A673 (cell line): ENCODE measurements at regions of chr6 and their contacts with region 1.

Region 1: GRCh38 chr6:20266851-20267608 is 54.8 kb upstream of the MBOAT1 start:
- DNase-seq: no peak
- H3K4me3 ChIP-seq: no peak overlapping the region
- H3K27ac ChIP-seq: no peak overlapping the region
- H3K4me1 ChIP-seq: no peaks in the 10 kb centered on the region
- H3K27me3 ChIP-seq: no peaks in the 10 kb centered on the region
- CTCF ChIP-seq: no peak

Region 2: GRCh38 chr6:20069021-20069522 is 198.0 kb before region 1 on chr6:
- CTCF ChIA-PET with region 1: no interaction called
- POLR2A ChIA-PET with region 1: interaction called, 12 read pairs
- intact Hi-C with region 1: no loop called
- DNase-seq: peak; percentile 91
- H3K4me3 ChIP-seq: peak overlapping the region; percentile 16
- H3K27ac ChIP-seq: peak overlapping the region; percentile 22
- H3K4me1 ChIP-seq: peaks cover 19% of the 10 kb centered on the region
- H3K27me3 ChIP-seq: no peaks in the 10 kb centered on the region
- CTCF ChIP-seq: no peak